ENCODE measurements at regions of chr1 and their contacts with region 1.

Region 1: DNA sequence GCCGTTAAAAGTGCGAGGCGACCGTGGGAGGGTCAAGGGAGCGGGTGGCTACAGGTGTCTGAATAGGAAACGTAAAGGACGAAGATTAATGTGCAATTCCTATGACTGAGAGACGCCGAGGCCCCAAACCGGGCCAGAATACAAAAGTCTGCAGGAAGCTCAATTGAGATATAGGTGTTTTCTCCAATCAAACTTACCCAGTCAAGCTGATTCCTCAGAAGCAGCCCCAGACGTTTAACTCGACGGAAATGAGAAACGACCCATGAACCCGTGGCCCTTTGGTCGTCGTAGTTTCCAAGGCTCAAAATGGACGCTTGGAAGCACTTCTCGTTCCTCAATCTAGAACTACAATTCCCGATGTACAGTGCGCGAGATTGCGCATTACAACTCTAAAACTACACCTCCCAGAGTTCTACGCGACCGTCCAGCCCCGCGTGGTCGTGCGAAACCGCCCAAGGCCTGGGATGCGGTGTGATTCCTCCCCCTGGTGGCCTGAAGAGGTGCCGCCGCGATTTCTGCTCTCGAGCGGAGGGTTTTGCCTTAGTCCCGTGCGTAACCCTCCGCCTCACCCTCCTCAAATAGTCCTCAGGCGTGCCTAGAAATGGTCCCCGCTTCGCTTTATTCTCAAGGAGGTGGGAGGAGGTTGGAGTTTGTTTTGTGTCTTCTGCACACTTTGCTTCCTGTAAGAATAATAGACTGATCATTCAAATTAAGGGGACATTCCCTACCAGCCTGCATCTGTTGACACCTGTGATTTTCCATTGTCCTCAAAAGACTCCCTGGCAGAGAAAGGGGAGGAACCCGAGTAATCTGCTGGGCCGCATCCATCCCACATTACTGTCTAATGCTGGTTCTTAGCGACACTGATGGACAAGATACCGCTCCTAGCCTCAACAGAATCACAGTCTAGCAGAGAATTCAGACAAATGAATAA is at the start of gene PAFAH2:
- DNase-seq: peak; percentile 97 to 98
- ATAC-seq: peak; percentile 96 to 98
- H3K4me3 ChIP-seq: peak within 1 kb of the TSS; percentile 57 to 86 (median 73)
- H3K27ac ChIP-seq: peak within 1 kb of the TSS; percentile 88 to 96 (median 92)
- H3K4me1 ChIP-seq: peaks cover 17 to 25% of the 10 kb centered on the region in 2 donors
- H3K27me3 ChIP-seq: no peaks in the 10 kb centered on the region
- CTCF ChIP-seq: peak; percentile 94 to 100 (median 99)
- POLR2A ChIP-seq: peak in 1 of 2 donors; percentile 63
- total RNA-seq, gene PAFAH2: 9.0 to 35.5 (median 16.1) TPM

Region 2: GRCh38 chr1:25819576-25820246 is 178.4 kb before region 1 on chr1 and contains the start of gene MTFR1L:
- in situ Hi-C with region 1: no loop called
- intact Hi-C with region 1: loop called (anchors 5 kb)
- DNase-seq: peak; percentile 82 to 83
- ATAC-seq: peak; percentile 80 to 81
- H3K4me3 ChIP-seq: peak within 1 kb of the TSS; percentile 86 to 95 (median 88)
- H3K27ac ChIP-seq: peak within 1 kb of the TSS; percentile 93 to 99 (median 96)
- H3K4me1 ChIP-seq: peaks cover 33 to 49% of the 10 kb centered on the region in 2 donors
- H3K27me3 ChIP-seq: no peaks in the 10 kb centered on the region
- CTCF ChIP-seq: no peak
- POLR2A ChIP-seq: peak; percentile 93 to 94
- total RNA-seq, gene MTFR1L: 123 to 186 (median 170) TPM

Region 3: GRCh38 chr1:25904943-25905679 is 93.0 kb before region 1 on chr1:
- in situ Hi-C with region 1: no loop called
- intact Hi-C with region 1: loop called (anchors 1 kb)
- DNase-seq: peak; percentile 85
- ATAC-seq: peak; percentile 86 to 89
- H3K4me3 ChIP-seq: peak overlapping the region; percentile 69 to 87 (median 74)
- H3K27ac ChIP-seq: peak overlapping the region in 3 of 4 donors; percentile 68 to 83 (median 73)
- H3K4me1 ChIP-seq: peaks cover 9 to 15% of the 10 kb centered on the region in 2 donors
- H3K27me3 ChIP-seq: no peaks in the 10 kb centered on the region
- CTCF ChIP-seq: no peak
- POLR2A ChIP-seq: no peak

Measured in gastrocnemius medialis (tissue), 4 donors.